AG04449 (cell line): ENCODE measurements at regions of chr6 and their contacts with region 1.

Region 1: GRCh38 chr6:4210629-4211423 is 75.5 kb upstream of the ECI2 start:
- DNase-seq: no peak
- H3K4me3 ChIP-seq: no peak overlapping the region
- CTCF ChIP-seq: peak; percentile 74

Region 2: DNA sequence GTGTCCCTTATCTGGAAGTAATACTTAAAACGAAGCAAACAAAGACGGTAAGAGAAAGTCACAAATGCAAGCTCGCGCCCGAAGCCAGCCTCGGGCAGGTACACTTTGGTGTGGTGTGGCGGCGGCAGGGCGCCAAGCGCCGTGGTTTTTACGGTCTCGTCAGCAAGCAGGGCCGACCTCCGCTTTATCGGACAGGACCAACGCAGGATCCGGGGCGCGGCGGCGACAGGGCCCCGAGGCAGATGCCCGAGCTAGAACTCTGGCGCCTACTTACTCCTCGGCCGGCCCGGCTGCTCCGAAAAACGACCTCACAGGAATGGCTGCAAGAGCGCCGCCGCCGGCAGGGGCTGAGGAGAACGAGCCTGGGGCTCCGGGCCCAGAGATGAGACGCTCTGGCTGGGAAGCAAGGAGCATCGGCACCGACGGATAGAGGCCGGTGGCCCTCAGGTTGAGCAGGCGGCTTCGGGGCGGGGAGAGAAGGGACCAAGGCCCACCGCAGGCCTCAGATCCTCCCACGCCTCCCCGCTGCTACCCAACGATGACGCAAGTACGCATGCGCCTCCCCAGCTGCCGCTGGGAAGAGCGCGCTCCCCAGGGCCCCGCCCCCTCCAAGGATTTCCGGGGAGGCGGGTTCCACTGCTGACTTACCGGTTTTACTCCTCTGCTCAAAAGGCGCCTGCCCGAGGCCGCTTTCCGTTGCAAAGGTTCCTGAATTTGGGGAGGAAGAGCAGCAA is 192.5 kb before region 1 on chr6:
- CTCF ChIA-PET with region 1: interaction called, 16 read pairs
- POLR2A ChIA-PET with region 1: no interaction called
- DNase-seq: peak; percentile 54
- H3K4me3 ChIP-seq: peak overlapping the region; percentile 93
- CTCF ChIP-seq: peak; percentile 65

Region 3: GRCh38 chr6:4055420-4056041 is 155.3 kb before region 1 on chr6:
- CTCF ChIA-PET with region 1: interaction called, 81 read pairs
- POLR2A ChIA-PET with region 1: no interaction called
- DNase-seq: peak; percentile 50
- H3K4me3 ChIP-seq: no peak overlapping the region
- CTCF ChIP-seq: peak; percentile 49

Region 4: GRCh38 chr6:4164117-4164442 is 46.7 kb before region 1 on chr6:
- CTCF ChIA-PET with region 1: interaction called, 24 read pairs
- POLR2A ChIA-PET with region 1: no interaction called
- DNase-seq: no peak
- H3K4me3 ChIP-seq: no peak overlapping the region
- CTCF ChIP-seq: no peak

Region 5: GRCh38 chr6:4178737-4179333 is 32.0 kb before region 1 on chr6:
- CTCF ChIA-PET with region 1: interaction called, 12 read pairs
- POLR2A ChIA-PET with region 1: no interaction called
- DNase-seq: no peak
- H3K4me3 ChIP-seq: no peak overlapping the region
- CTCF ChIP-seq: no peak

Region 6: DNA sequence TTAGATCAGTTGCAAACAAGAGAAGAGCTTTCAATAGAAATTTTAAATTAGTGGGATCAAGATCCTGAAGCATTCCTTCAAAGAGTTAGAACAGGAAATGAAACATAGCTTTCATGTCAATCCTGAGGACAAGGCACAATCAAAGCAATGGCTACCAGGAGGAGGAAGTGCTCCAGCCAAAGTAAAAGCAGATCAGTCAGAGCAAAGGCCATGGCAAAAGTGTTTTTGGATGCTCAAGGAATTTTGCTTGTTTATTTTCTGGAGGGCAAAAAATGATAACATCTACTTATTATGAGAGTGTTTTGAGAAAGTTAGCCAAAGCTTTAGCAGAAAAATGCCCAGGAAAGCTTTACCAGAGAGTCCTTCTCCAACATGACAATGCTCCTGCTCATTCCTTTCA is 14.5 kb before region 1 on chr6:
- CTCF ChIA-PET with region 1: interaction called, 16 read pairs
- POLR2A ChIA-PET with region 1: no interaction called
- DNase-seq: no peak
- H3K4me3 ChIP-seq: no peak overlapping the region
- CTCF ChIP-seq: no peak